CD8-positive, alpha-beta T cell (primary cell): ENCODE measurements at regions of chr17 and their contacts with region 1.

Region 1: GRCh38 chr17:45218895-45219661 is 2.6 kb upstream of the FMNL1 start:
- DNase-seq: peak; percentile 79 to 95 (median 89)
- ATAC-seq: peak; percentile 45
- H3K4me3 ChIP-seq: peak overlapping the region in 1 of 2 experiments; percentile 1
- H3K4me3 Mint-ChIP-seq: peak overlapping the region; percentile 91
- H3K27ac ChIP-seq: no peak overlapping the region
- H3K27ac Mint-ChIP-seq: peak overlapping the region; percentile 90
- H3K4me1 ChIP-seq: peaks cover 25% of the 10 kb centered on the region
- H3K4me1 Mint-ChIP-seq: peaks cover 37% of the 10 kb centered on the region
- H3K27me3 ChIP-seq: no peaks in the 10 kb centered on the region
- H3K27me3 Mint-ChIP-seq: no peaks in the 10 kb centered on the region
- CTCF ChIP-seq: peak; percentile 96

Region 2: GRCh38 chr17:44708401-44709181 is 510.5 kb before region 1 on chr17 and contains the start of gene DBF4B:
- CTCF ChIA-PET with region 1: no interaction called
- POLR2A ChIA-PET with region 1: no interaction called
- intact Hi-C with region 1: no loop called
- DNase-seq: peak; percentile 69 to 95 (median 82)
- ATAC-seq: peak; percentile 98
- H3K4me3 ChIP-seq: peak within 1 kb of the TSS; percentile 92 to 95
- H3K4me3 Mint-ChIP-seq: no peak within 1 kb of the TSS
- H3K27ac ChIP-seq: peak within 1 kb of the TSS; percentile 51 to 55
- H3K27ac Mint-ChIP-seq: no peak within 1 kb of the TSS
- H3K4me1 ChIP-seq: peaks cover 13% of the 10 kb centered on the region
- H3K4me1 Mint-ChIP-seq: peaks cover 5% of the 10 kb centered on the region
- H3K27me3 ChIP-seq: no peaks in the 10 kb centered on the region
- H3K27me3 Mint-ChIP-seq: peaks cover 6% of the 10 kb centered on the region
- CTCF ChIP-seq: no peak
- total RNA-seq, gene DBF4B: 0.71 to 1.3 TPM

Region 3: GRCh38 chr17:45197555-45198334 is 21.3 kb before region 1 on chr17:
- CTCF ChIA-PET with region 1: interaction called, 10 read pairs
- POLR2A ChIA-PET with region 1: no interaction called
- intact Hi-C with region 1: no loop called
- DNase-seq: peak; percentile 75 to 93 (median 86)
- ATAC-seq: peak; percentile 100
- H3K4me3 ChIP-seq: no peak overlapping the region
- H3K4me3 Mint-ChIP-seq: no peak overlapping the region
- H3K27ac ChIP-seq: no peak overlapping the region
- H3K27ac Mint-ChIP-seq: no peak overlapping the region
- H3K4me1 ChIP-seq: peaks cover 7% of the 10 kb centered on the region
- H3K4me1 Mint-ChIP-seq: peaks cover 4% of the 10 kb centered on the region
- H3K27me3 ChIP-seq: no peaks in the 10 kb centered on the region
- H3K27me3 Mint-ChIP-seq: no peaks in the 10 kb centered on the region
- CTCF ChIP-seq: peak; percentile 85

Region 4: DNA sequence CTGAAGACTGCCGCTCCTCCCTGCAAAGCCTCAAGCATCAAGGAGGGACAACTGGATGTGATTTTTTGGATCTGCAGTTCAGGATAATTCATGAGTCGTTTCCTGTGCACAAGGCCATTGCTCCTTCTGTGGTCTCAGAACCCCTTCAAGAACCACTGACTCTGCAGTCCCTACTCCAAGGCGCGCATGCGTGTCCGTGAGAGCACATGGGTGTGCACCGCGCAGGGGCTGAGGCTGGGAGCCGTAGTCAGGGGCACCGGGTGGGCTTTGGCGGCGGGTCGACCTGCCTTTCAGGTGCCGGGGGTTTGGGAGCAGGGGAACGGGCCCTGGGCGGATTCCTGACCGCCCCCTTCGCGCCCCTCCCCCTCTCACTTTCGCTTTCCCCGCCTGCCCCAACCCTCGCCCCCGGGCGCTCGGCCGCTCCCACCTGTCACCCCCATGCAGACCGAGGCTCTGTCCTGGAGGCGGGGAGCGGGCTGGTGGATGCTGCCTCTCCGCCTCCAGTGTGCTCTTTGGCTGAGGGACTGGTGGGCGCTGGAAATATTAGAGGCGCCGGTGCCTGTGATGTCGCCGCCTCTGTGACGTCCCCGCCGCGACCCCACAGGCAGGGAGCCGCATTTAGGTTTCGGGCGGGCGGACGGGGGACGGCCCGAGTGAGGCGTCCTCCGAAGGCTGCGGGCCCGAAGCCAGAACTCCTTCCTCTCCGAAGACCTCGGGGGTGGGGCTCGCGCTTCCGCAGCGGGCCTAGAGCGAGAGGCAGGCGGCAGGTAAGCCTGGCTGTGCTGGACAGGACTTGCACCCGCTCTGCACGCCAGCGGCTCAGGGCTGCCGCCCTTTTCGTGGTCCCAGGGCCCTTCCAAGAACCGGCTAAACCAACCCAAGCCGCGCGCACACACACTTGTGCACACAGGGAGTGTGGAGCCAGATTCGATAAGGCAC is 42.8 kb after region 1 on chr17 and contains the start of gene SPATA32:
- CTCF ChIA-PET with region 1: interaction called, 1,097 read pairs
- POLR2A ChIA-PET with region 1: interaction called, 3 read pairs
- intact Hi-C with region 1: no loop called
- DNase-seq: peak; percentile 37 to 85 (median 75)
- ATAC-seq: peak; percentile 86
- H3K4me3 ChIP-seq: peak within 1 kb of the TSS; percentile 71 to 76
- H3K4me3 Mint-ChIP-seq: peak within 1 kb of the TSS; percentile 83
- H3K27ac ChIP-seq: peak within 1 kb of the TSS; percentile 29 to 74
- H3K27ac Mint-ChIP-seq: peak within 1 kb of the TSS; percentile 87
- H3K4me1 ChIP-seq: peaks cover 32% of the 10 kb centered on the region
- H3K4me1 Mint-ChIP-seq: peaks cover 29% of the 10 kb centered on the region
- H3K27me3 ChIP-seq: no peaks in the 10 kb centered on the region
- H3K27me3 Mint-ChIP-seq: no peaks in the 10 kb centered on the region
- CTCF ChIP-seq: no peak
- total RNA-seq, gene SPATA32: 0.22 TPM in 1 of 2 experiments, not detected in the other

Region 5: GRCh38 chr17:45307290-45308015 is 88.4 kb after region 1 on chr17:
- CTCF ChIA-PET with region 1: interaction called, 34 read pairs
- POLR2A ChIA-PET with region 1: interaction called, 3 read pairs
- intact Hi-C with region 1: no loop called
- DNase-seq: peak in 4 of 9 experiments; percentile 36 to 65 (median 42)
- ATAC-seq: peak; percentile 55
- H3K4me3 ChIP-seq: no peak overlapping the region
- H3K4me3 Mint-ChIP-seq: peak overlapping the region; percentile 42
- H3K27ac ChIP-seq: peak overlapping the region; percentile 32 to 33
- H3K27ac Mint-ChIP-seq: peak overlapping the region; percentile 81
- H3K4me1 ChIP-seq: peaks cover 62% of the 10 kb centered on the region
- H3K4me1 Mint-ChIP-seq: peaks cover 77% of the 10 kb centered on the region
- H3K27me3 ChIP-seq: no peaks in the 10 kb centered on the region
- H3K27me3 Mint-ChIP-seq: no peaks in the 10 kb centered on the region
- CTCF ChIP-seq: no peak

Region 6: GRCh38 chr17:45394913-45395568 is 176.0 kb after region 1 on chr17:
- CTCF ChIA-PET with region 1: interaction called, 12 read pairs
- POLR2A ChIA-PET with region 1: no interaction called
- intact Hi-C with region 1: no loop called
- DNase-seq: peak in 6 of 9 experiments; percentile 26 to 73 (median 56)
- ATAC-seq: peak; percentile 57
- H3K4me3 ChIP-seq: no peak overlapping the region
- H3K4me3 Mint-ChIP-seq: no peak overlapping the region
- H3K27ac ChIP-seq: peak overlapping the region in 1 of 2 experiments; percentile 25
- H3K27ac Mint-ChIP-seq: peak overlapping the region; percentile 72
- H3K4me1 ChIP-seq: no peaks in the 10 kb centered on the region
- H3K4me1 Mint-ChIP-seq: peaks cover 2% of the 10 kb centered on the region
- H3K27me3 ChIP-seq: no peaks in the 10 kb centered on the region
- H3K27me3 Mint-ChIP-seq: no peaks in the 10 kb centered on the region
- CTCF ChIP-seq: peak; percentile 51